Caco-2 (cell line): ENCODE measurements at regions of chr22 and their contacts with region 1.

Region 1: DNA sequence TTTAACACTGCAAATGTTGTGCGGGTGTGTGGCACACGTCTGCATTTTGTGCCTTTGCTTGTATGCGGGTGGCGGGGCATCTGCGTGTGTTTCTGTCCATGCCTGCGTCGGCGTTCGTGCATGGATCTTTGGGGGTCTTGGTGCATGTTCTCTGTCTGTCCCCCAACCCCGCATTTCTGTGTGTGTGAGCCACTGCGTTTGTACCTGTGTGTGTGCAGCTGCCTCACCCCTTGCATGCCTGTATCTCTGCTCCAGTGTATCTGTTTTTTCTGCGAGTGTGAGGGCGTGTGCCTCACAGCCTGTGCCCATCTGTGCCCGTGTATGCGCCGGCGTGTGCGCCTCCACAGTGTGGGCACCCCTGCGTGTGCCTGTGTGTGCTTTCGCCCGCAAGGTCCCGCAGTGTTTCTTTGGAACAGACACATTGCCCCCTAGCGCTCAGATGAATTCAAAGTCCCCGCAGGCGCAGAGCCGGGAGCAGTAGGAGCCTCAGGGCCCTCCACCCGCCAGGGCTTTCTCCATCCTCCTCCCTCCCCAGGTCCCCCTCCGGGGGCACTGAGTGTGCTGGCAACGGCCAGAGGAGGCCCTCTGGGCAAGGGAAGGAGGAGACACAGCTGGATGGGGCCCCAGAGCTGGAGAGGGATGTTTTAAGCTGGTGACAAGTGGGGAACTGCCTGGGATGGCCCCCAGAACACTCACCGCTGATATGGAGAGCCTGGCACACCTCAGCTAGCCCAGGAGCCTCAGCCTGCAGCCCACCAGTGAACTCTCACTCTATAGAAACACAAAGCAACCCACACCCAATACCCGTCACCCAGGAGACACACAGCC is 3.1 kb upstream of the MN1 start:
- DNase-seq: peak; percentile 66 to 74
- H3K4me3 ChIP-seq: no peak overlapping the region
- H3K4me3 Mint-ChIP-seq: no peak overlapping the region
- H3K27ac Mint-ChIP-seq: no peak overlapping the region
- H3K4me1 ChIP-seq: no peaks in the 10 kb centered on the region
- H3K4me1 Mint-ChIP-seq: peaks cover 6% of the 10 kb centered on the region
- H3K27me3 ChIP-seq: peaks cover 2% of the 10 kb centered on the region
- H3K27me3 Mint-ChIP-seq: peaks cover 10% of the 10 kb centered on the region
- CTCF ChIP-seq: peak; percentile 61 to 69

Region 2: DNA sequence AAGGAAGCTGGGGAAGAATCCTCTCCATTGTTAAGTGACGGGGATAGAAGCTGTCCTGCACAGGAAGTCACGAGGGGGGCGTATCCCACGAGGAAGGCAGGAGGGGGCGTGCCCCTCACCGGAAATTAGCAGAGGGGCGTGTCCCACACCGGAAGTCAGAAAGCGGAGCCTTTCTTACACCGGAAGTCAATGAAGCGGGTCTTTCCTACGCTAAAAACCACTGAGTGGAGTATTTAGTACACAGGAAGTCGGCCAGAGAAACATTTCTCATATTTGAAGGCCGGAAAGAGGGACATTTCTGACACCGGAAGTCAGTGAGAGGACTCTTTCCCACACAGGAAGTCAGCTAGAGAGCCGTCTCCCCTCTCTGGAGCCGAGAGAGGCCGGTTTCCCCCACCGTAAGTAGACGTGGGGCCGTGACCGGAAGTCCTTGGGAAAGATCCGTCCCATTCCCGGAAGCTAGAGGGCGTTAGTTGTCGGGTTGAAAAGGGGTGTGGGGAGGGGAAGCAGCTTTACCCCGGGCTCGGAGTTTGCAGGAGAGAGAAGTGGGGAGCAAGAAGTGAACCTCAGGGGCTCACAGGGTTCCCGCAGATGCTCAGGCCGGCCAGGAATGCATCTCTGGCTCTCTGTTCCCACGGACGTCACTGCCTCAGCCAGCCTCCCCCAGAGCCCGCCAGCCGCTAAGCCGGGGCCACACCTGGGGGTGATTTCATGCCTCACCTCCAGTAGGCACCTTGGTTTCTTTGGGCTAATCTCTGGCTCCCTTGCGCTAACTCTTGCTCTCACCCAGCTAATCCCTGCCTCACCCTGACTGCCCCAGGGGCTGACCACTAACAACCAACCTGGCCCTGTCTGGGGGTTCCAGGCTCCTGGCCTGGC is 1131.9 kb before region 1 on chr22:
- CTCF ChIA-PET with region 1: no interaction called
- POLR2A ChIA-PET with region 1: no interaction called
- intact Hi-C with region 1: loop called (anchors 10 kb)
- DNase-seq: peak; percentile 88 to 89
- H3K4me3 ChIP-seq: peak overlapping the region; percentile 70
- H3K4me3 Mint-ChIP-seq: peak overlapping the region; percentile 80
- H3K27ac Mint-ChIP-seq: peak overlapping the region; percentile 88
- H3K4me1 ChIP-seq: no peaks in the 10 kb centered on the region
- H3K4me1 Mint-ChIP-seq: no peaks in the 10 kb centered on the region
- H3K27me3 ChIP-seq: no peaks in the 10 kb centered on the region
- H3K27me3 Mint-ChIP-seq: no peaks in the 10 kb centered on the region
- CTCF ChIP-seq: peak; percentile 29 to 39

Region 3: DNA sequence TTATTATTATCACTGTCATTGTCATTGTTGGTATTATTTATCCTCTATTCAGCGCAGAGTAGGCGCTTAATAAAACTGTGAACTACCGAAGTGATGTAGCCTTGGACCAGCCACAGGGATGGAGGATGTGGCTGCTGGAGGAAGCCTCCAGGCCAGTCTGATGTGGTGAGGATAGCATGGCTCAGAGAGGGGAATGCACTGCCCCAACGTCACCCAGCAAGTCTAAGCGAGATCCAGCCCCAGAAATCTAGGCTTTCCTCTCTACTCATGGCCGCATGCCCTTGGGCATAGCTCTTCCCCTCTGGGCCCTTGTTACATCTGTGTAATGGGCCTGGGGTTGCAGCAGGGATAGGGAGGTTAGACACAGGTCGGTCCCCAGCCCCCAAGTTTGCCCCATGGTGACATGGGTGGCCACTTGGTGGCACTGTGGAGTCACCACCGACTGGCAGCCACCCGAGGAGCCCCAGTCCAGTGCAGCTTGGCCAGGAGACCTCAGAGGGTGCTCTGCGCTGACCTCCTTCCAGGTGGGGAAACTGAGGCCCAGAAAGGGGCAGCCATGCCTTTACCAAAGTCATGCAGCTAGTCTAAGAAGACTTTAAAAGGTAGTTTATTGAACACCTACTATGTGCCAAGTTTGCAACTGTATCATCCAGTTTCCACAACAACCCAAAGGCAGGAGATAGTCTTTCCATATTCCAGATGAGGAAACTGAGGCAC is 398.9 kb before region 1 on chr22:
- CTCF ChIA-PET with region 1: interaction called, 4 read pairs
- POLR2A ChIA-PET with region 1: no interaction called
- intact Hi-C with region 1: loop called (anchors 1 kb)
- DNase-seq: peak; percentile 40 to 60
- H3K4me3 ChIP-seq: no peak overlapping the region
- H3K4me3 Mint-ChIP-seq: no peak overlapping the region
- H3K27ac Mint-ChIP-seq: no peak overlapping the region
- H3K4me1 ChIP-seq: no peaks in the 10 kb centered on the region
- H3K4me1 Mint-ChIP-seq: no peaks in the 10 kb centered on the region
- H3K27me3 ChIP-seq: no peaks in the 10 kb centered on the region
- H3K27me3 Mint-ChIP-seq: peaks cover 4% of the 10 kb centered on the region
- CTCF ChIP-seq: peak; percentile 59 to 72

Region 4: GRCh38 chr22:27632451-27633295 is 172.0 kb before region 1 on chr22:
- CTCF ChIA-PET with region 1: no interaction called
- POLR2A ChIA-PET with region 1: no interaction called
- intact Hi-C with region 1: loop called (anchors 10 kb)
- DNase-seq: peak in 1 of 2 experiments; percentile 59
- H3K4me3 ChIP-seq: no peak overlapping the region
- H3K4me3 Mint-ChIP-seq: no peak overlapping the region
- H3K27ac Mint-ChIP-seq: no peak overlapping the region
- H3K4me1 ChIP-seq: peaks cover 15% of the 10 kb centered on the region
- H3K4me1 Mint-ChIP-seq: peaks cover 7% of the 10 kb centered on the region
- H3K27me3 ChIP-seq: no peaks in the 10 kb centered on the region
- H3K27me3 Mint-ChIP-seq: no peaks in the 10 kb centered on the region
- CTCF ChIP-seq: no peak

Region 5: GRCh38 chr22:27814993-27815392 is 10.3 kb after region 1 on chr22:
- CTCF ChIA-PET with region 1: no interaction called
- POLR2A ChIA-PET with region 1: no interaction called
- intact Hi-C with region 1: no loop called
- DNase-seq: no peak
- H3K4me3 ChIP-seq: no peak overlapping the region
- H3K4me3 Mint-ChIP-seq: no peak overlapping the region
- H3K27ac Mint-ChIP-seq: no peak overlapping the region
- H3K4me1 ChIP-seq: no peaks in the 10 kb centered on the region
- H3K4me1 Mint-ChIP-seq: no peaks in the 10 kb centered on the region
- H3K27me3 ChIP-seq: no peaks in the 10 kb centered on the region; the same call in 1 of the 2 replicates
- H3K27me3 Mint-ChIP-seq: peaks cover 10% of the 10 kb centered on the region
- CTCF ChIP-seq: no peak